HCT116 (cell line): ENCODE measurements at regions of chr19 and their contacts with region 1.

Region 1: GRCh38 chr19:41192574-41193429 is at the start of gene CYP2S1:
- DNase-seq: peak; percentile 15
- ATAC-seq: peak; percentile 95
- H3K4me3 ChIP-seq: peak within 1 kb of the TSS; percentile 75 to 79
- H3K27ac ChIP-seq: peak within 1 kb of the TSS; percentile 78
- H3K4me1 ChIP-seq: peaks cover 12 to 23% of the 10 kb centered on the region in 2 experiments
- H3K27me3 ChIP-seq: no peaks in the 10 kb centered on the region
- CTCF ChIP-seq: peak in 1 of 3 experiments; percentile 13; a peak in 1 of 6 replicates
- POLR2A ChIP-seq: no peak
- RAD21 ChIP-seq: 0 out of 2 replicates have a peak, but pooled peaks have one; percentile 10
- total RNA-seq, gene CYP2S1: 17.6 TPM

Region 2: DNA sequence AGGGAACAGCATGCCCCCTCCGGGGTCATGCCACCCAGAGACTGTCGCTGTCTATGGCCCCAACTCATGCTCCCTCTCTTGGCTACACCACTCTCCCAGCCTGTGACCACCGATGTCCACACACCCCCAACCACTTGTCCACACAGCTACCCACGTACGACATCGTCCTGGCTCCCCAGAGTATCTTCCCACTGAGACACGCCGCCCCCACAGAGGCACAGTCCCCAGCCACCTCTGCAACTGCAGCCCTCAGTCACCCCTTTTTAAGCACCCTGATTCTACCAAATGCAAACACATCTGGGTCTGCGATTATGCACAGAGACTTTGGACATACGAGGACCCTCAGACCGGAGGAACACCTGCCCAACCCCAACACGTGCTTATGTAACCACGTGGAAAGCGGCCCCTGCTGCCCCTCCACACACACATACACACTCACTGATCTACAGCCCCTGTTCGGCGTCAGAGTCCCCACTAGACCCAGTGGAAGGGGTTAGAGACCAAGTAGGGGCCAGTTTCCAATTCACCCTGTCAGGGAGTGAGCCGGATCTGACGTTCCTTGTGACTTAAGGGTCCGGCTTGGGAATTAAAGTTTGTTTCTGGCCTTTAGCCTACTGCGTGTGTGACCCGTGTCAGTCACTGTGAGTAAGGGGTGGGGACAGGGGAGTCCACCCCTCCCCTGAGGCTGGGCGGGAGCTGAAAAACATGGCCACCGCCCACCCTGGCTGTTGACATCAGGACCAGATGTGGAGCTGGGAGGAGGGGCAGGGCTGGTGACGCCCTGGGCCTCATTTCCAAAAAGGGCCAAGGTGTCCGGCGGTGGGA is 14.3 kb after region 1 on chr19:
- CTCF ChIA-PET with region 1: interaction called, 17 read pairs
- POLR2A ChIA-PET with region 1: interaction called, 6 read pairs
- RAD21 ChIA-PET with region 1: no interaction called
- intact Hi-C with region 1: no loop called
- DNase-seq: no peak
- ATAC-seq: no peak
- H3K4me3 ChIP-seq: no peak overlapping the region
- H3K27ac ChIP-seq: no peak overlapping the region
- H3K4me1 ChIP-seq: 0 out of 4 replicates have a peak, but pooled peaks cover 0 to 3% of the 10 kb centered on the region in 2 experiments
- H3K27me3 ChIP-seq: no peaks in the 10 kb centered on the region
- CTCF ChIP-seq: no peak
- POLR2A ChIP-seq: no peak
- RAD21 ChIP-seq: no peak